ENCODE measurements at regions of chrX and their contacts with region 1.

Region 1: GRCh38 chrX:68746988-68747387 is 81.8 kb upstream of the EFNB1 start:
- DNase-seq: no peak

Region 2: DNA sequence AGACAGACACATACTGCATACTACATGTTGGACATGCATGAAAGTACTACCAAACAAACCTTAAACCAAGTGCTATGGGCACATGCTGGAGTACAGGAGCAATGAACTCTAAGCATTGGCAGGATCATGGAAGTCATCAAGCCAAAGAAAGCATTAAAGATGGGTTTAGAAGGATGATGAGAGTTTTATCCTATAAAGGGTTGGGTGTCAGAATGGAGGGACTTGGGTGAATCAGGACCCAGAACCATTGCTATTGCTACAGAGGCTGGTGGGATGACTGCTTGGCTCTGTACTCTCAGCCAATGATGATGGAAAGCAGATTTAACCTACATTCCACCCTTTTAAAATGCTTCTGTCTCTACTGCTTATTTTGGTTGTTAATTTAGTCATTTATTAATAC is 1874.2 kb before region 1 on chrX:
- intact Hi-C with region 1: no loop called
- DNase-seq: no peak

Region 3: DNA sequence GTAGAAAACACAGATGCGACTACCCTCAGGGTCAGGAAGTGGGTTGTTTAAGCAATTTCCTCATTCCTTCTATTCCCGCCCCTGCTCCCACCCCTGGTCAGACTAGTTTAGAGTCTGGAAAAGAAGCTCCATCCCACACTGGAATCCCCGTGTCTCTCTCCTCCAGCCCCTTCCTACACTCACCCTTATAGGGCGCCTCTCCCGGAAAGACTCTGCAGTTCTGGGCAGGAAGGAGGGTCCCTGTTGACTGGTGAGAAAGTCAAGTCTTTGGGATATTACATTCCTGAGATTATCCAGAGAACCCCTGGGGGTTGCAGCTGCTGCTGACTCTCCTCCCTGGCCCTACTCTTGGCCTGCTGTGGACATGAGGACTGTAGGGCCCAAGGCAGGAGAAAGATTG is 87.6 kb before region 1 on chrX:
- intact Hi-C with region 1: no loop called
- DNase-seq: no peak

Region 4: GRCh38 chrX:68703846-68704245 is 43.1 kb before region 1 on chrX:
- intact Hi-C with region 1: loop called in 1 of 2 experiments (anchors 1 kb)
- DNase-seq: no peak

Region 5: DNA sequence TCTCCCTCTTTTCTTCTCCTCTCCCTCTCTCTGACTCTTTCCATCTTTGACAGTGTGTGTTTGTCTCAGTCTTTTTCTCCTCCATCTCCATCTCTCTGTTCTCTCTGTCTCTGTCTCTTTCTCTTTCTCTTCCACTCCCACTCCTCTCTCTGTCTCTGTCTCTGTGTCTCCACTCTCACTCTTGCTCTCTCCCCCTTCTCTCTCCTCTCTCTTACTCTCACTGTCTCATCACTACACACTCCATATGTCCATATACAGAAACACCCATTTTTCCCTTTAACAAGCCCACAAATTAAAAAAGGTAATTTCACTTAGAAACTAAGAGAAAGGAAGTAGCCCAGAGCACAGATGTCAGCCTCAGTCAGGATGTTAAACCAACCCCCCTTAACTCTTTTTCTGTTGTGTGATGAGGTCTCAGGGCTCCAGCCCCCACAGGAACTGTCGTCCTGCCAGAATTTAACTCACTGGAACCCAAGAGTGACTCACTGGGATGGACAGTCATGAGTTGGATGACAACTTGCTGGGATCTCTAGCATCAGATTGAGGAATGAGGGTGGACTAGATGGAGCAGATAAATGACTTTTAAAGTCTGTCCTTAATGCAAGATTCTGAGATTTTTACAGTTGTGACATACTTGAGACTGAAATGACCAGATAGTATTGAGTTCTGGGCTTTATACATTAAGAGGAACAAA is 1342.8 kb after region 1 on chrX:
- intact Hi-C with region 1: loop called in 1 of 2 experiments (anchors 5 kb)
- DNase-seq: no peak